GM10248 (cell line): ENCODE measurements at regions of chr1 and their contacts with region 1.

Region 1: DNA sequence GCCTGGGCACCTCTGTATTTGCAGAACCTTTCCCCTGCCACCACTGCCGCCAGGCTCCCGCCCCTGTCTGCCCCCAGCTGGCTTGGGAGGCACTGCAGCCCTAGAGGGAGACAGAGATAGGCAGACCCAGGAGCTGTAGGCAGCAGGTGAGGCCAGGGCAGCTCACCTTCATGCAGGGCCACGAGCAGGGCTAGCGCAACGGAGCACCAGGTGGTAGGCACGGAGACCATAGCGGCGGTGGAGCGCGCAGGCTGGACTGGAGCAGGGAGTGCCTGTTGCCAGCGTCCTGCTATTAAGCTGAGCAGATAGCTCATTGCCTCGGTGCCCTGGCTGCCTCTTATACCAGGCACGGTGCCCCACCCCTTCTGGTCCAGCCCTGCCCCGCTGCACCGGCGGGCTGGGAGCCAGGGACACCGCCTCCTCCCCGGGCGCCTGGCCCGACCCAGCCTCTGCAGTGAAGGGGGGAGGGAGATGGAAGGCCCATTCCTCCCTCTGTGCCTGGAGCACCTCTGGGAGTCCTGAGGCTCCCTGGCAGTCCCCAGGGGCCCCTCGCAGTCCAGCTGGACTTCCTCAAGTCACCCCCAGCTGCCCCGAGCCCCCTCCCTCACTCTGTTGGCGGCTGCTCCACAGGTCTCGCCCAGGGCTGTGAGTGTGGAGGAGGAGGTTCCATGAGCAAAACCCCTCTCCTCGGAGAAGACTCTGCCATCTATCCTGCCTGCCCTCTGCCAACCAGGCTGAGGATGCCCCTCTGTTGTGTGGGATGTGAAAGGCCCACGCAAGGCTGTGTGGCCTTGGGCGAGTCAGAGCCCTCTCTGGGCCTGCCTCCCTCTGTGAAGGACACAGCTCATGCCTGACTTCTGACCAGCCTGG is at the start of gene EDN2:
- DNase-seq: no peak
- CTCF ChIP-seq: peak; percentile 29

Region 2: GRCh38 chr1:41496080-41497055 is 11.8 kb after region 1 on chr1:
- CTCF ChIA-PET with region 1: interaction called, 104 read pairs
- POLR2A ChIA-PET with region 1: no interaction called
- DNase-seq: peak; percentile 76
- CTCF ChIP-seq: peak; percentile 11

Region 3: DNA sequence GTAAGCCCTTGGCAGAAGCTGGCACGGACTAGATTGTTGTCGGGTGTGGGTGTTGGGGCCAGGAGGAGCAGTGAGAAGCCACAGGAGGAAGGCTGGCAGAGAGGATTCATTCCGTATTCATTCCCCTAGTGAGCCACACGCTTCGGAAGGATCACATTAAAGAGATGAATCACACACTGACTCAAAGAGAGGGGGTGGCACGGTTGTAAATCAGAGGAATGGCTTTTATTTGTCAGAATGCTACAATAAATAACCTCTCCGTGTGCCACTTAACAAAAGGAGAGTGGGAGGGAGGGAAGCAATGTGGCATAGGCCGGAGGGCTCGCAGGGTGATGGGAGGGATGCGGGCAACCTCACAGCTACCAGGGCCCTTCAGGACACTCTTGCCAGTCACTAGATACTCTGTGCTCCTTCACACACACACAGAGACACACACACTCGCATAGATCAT is 298.6 kb after region 1 on chr1:
- CTCF ChIA-PET with region 1: no interaction called
- POLR2A ChIA-PET with region 1: no interaction called
- DNase-seq: no peak
- CTCF ChIP-seq: no peak